ENCODE measurements at regions of chr7 and their contacts with region 1.

Region 1: DNA sequence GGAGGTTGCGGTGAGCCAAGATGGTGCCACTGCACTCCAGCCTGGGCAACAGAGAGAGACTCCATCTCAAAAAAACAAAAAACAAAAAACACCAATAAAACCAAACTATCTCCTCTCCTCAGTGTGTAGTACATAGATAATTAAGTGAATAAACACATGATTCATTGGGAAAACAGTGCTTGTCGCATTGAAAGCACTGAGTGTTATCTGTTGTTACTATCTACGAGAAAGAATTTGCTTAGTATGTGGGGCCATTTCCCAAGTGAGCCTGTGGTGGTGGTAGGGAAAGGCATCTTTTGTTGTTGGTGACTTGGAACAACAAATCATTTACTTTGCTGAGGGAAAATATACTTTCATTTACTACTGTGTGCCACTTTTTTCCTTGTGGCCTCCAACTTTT is 42.6 kb downstream of the RSBN1L start:
- DNase-seq: peak; percentile 55
- ATAC-seq: peak; percentile 89
- H3K4me3 ChIP-seq: no peak overlapping the region
- H3K27ac ChIP-seq: no peak overlapping the region
- H3K4me1 ChIP-seq: peaks cover 6% of the 10 kb centered on the region; the same call in 1 of the 2 replicates
- H3K27me3 ChIP-seq: no peaks in the 10 kb centered on the region
- CTCF ChIP-seq: no peak
- POLR2A ChIP-seq: no peak
- RAD21 ChIP-seq: no peak

Region 2: DNA sequence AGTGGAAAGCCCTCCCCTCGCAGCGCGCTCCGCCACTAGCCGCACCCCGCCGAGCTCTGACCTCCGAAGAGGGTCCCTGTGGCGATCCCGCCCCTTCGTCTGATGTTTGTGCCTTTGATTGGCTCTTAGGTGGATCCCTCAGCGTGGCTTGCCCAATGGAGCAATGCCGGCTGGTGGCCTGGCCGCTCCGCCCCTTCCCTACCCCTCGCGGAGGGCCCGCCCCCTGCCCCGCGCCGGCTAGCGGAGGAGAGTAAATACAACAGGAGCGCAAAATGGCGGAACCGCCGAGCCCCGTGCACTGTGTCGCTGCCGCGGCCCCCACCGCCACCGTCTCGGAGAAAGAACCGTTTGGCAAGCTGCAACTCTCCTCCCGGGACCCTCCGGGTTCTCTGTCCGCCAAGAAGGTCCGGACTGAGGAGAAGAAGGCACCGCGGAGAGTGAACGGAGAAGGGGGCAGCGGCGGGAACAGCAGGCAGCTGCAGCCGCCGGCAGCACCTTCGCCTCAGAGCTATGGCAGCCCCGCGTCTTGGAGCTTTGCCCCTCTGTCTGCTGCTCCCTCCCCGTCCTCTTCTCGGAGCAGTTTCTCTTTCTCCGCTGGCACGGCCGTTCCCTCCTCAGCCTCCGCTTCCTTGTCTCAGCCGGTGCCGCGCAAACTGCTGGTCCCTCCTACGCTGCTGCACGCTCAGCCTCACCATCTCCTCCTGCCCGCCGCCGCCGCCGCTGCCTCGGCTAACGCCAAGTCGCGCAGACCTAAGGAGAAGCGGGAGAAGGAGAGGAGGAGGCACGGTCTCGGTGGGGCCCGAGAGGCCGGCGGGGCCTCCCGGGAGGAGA is 42.5 kb before region 1 on chr7 and contains the start of gene RSBN1L:
- CTCF ChIA-PET with region 1: no interaction called
- POLR2A ChIA-PET with region 1: no interaction called
- dilution Hi-C with region 1: no loop called
- in situ Hi-C with region 1: no loop called
- intact Hi-C with region 1: loop called (anchors 5 kb)
- DNase-seq: peak; percentile 97
- ATAC-seq: peak; percentile 98
- H3K4me3 ChIP-seq: peak within 1 kb of the TSS; percentile 91
- H3K27ac ChIP-seq: peak within 1 kb of the TSS; percentile 92
- H3K4me1 ChIP-seq: no peaks in the 10 kb centered on the region
- H3K27me3 ChIP-seq: no peaks in the 10 kb centered on the region
- CTCF ChIP-seq: peak; percentile 39
- POLR2A ChIP-seq: peak; percentile 79
- RAD21 ChIP-seq: peak; percentile 7; the same call in 1 of the 2 replicates
- total RNA-seq, gene RSBN1L: 14.7 and 23.6 TPM in 2 replicates

Region 3: GRCh38 chr7:78315119-78315518 is 576.2 kb after region 1 on chr7:
- CTCF ChIA-PET with region 1: no interaction called
- POLR2A ChIA-PET with region 1: no interaction called
- dilution Hi-C with region 1: no loop called
- in situ Hi-C with region 1: no loop called
- intact Hi-C with region 1: no loop called
- DNase-seq: no peak
- ATAC-seq: no peak
- H3K4me3 ChIP-seq: no peak overlapping the region
- H3K27ac ChIP-seq: no peak overlapping the region
- H3K4me1 ChIP-seq: no peaks in the 10 kb centered on the region
- H3K27me3 ChIP-seq: no peaks in the 10 kb centered on the region
- CTCF ChIP-seq: no peak
- POLR2A ChIP-seq: no peak
- RAD21 ChIP-seq: no peak